CD8-positive, alpha-beta T cell (primary cell): ENCODE measurements at regions of chr1 and their contacts with region 1.

Region 1: DNA sequence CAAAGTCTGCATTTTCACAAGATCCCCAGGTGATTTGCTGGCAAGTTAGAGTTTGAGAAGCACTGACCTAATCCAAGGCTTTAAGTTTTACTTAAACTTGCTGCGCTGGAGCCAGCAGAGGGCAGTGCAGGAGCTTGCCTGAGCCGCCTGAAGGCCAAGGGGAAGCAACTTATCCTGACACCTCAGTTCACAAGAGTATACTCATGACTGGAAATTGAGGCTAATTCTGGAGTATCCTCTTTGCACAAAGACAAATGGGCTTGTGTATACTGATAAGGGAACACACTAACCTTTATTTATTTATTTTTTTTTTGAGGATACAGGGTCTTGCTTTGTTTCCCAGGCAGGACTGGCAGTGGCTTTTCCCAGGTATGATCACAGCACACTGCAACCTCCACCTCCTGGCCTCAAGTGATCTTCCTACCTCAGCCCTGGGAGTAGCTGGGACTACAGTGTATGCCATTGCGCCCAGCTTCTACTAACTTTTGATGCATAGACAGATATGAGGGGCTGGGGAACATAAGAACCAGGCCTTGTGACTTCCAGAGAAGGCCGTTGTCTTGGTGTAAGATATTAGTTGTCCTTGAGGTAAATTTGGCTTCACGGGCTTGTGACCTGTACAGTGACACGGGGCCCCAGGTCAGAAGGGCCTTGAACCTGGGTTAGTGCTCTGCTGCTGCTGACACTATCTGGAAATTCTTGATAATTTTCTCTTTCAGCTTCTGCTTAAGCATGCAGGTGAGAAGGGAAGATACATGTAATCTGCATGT is 29.0 kb upstream of the SLAMF1 start:
- DNase-seq: peak; percentile 49 to 85 (median 80)
- ATAC-seq: peak; percentile 79
- H3K4me3 ChIP-seq: no peak overlapping the region
- H3K4me3 Mint-ChIP-seq: no peak overlapping the region
- H3K27ac ChIP-seq: peak overlapping the region in 1 of 2 experiments; percentile 47
- H3K27ac Mint-ChIP-seq: peak overlapping the region; percentile 84
- H3K4me1 ChIP-seq: peaks cover 45% of the 10 kb centered on the region
- H3K4me1 Mint-ChIP-seq: peaks cover 16% of the 10 kb centered on the region
- H3K27me3 ChIP-seq: no peaks in the 10 kb centered on the region
- H3K27me3 Mint-ChIP-seq: no peaks in the 10 kb centered on the region
- CTCF ChIP-seq: peak; percentile 76

Region 2: GRCh38 chr1:160354388-160354985 is 321.3 kb before region 1 on chr1:
- CTCF ChIA-PET with region 1: no interaction called
- POLR2A ChIA-PET with region 1: no interaction called
- intact Hi-C with region 1: no loop called
- DNase-seq: peak in 3 of 9 experiments; percentile 19 to 43 (median 33)
- ATAC-seq: peak; percentile 48
- H3K4me3 ChIP-seq: no peak overlapping the region
- H3K4me3 Mint-ChIP-seq: no peak overlapping the region
- H3K27ac ChIP-seq: no peak overlapping the region
- H3K27ac Mint-ChIP-seq: peak overlapping the region; percentile 37
- H3K4me1 ChIP-seq: no peaks in the 10 kb centered on the region
- H3K4me1 Mint-ChIP-seq: no peaks in the 10 kb centered on the region
- H3K27me3 ChIP-seq: no peaks in the 10 kb centered on the region
- H3K27me3 Mint-ChIP-seq: no peaks in the 10 kb centered on the region
- CTCF ChIP-seq: peak; percentile 30

Region 3: DNA sequence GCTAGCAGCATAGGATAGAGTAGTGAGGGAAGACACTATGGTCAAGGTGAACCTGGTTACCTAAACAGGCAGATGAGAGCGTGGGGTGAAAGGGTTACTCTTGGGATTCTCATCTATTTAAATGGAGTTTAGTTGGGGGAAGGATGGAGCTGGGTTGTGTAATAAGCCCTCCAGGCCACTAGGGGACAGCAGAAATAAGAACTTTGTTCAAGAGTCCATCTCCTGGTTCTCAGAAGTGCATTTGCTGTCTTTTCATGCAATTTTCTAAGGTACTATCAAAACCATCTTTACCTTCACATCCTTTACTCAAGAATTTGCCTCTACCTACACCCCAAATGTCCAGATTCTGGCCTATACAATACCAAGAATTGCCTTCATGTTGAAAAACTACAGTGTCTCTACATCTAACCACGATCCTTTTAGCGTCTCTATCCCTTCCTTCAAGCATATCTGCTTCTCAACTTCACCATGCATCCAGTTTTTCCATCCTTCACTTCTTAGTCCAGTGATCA is 57.0 kb before region 1 on chr1:
- CTCF ChIA-PET with region 1: interaction called, 75 read pairs
- POLR2A ChIA-PET with region 1: interaction called, 5 read pairs
- intact Hi-C with region 1: loop called (anchors 1 kb)
- DNase-seq: peak in 5 of 9 experiments; percentile 39 to 74 (median 43)
- ATAC-seq: peak; percentile 69
- H3K4me3 ChIP-seq: no peak overlapping the region
- H3K4me3 Mint-ChIP-seq: no peak overlapping the region
- H3K27ac ChIP-seq: no peak overlapping the region
- H3K27ac Mint-ChIP-seq: peak overlapping the region; percentile 49
- H3K4me1 ChIP-seq: peaks cover 13% of the 10 kb centered on the region
- H3K4me1 Mint-ChIP-seq: peaks cover 51% of the 10 kb centered on the region
- H3K27me3 ChIP-seq: no peaks in the 10 kb centered on the region
- H3K27me3 Mint-ChIP-seq: no peaks in the 10 kb centered on the region
- CTCF ChIP-seq: peak; percentile 77

Region 4: GRCh38 chr1:160646711-160647328 is 29.0 kb before region 1 on chr1 and contains the start of gene SLAMF1:
- CTCF ChIA-PET with region 1: interaction called, 19 read pairs
- POLR2A ChIA-PET with region 1: interaction called, 3 read pairs
- intact Hi-C with region 1: no loop called
- DNase-seq: peak in 5 of 9 experiments; percentile 34 to 71 (median 52)
- ATAC-seq: peak; percentile 74
- H3K4me3 ChIP-seq: peak within 1 kb of the TSS; percentile 51 to 60
- H3K4me3 Mint-ChIP-seq: peak within 1 kb of the TSS; percentile 87
- H3K27ac ChIP-seq: peak within 1 kb of the TSS; percentile 57 to 58
- H3K27ac Mint-ChIP-seq: peak within 1 kb of the TSS; percentile 88
- H3K4me1 ChIP-seq: peaks cover 73% of the 10 kb centered on the region
- H3K4me1 Mint-ChIP-seq: peaks cover 89% of the 10 kb centered on the region
- H3K27me3 ChIP-seq: no peaks in the 10 kb centered on the region
- H3K27me3 Mint-ChIP-seq: no peaks in the 10 kb centered on the region
- CTCF ChIP-seq: no peak
- total RNA-seq, gene SLAMF1: 12.8 to 18.6 TPM

Region 5: DNA sequence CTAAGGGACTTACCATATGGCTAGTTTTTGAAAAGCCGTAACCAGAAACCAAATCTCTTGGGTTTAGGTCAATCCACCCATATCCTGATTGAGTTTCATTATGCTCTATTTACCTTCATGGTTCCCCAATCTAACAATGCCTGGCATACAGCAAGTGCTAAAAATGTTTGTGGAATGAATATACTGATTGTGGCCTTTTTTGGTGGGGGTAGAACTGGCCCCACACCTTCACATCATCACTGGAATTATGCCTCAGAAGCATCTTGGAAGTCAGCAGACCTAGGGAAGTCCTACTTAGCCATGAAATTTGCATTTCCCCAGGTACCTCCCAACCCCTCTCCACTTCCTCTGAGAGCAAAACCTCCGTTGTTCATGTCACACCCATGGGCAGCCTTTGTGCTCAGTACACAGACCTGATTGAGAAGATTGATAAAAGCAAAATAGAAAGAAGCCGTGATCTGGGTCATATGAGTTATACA is 11.2 kb before region 1 on chr1:
- CTCF ChIA-PET with region 1: interaction called, 11 read pairs
- POLR2A ChIA-PET with region 1: interaction called, 5 read pairs
- intact Hi-C with region 1: loop called in 1 of 2 experiments (anchors 2 kb)
- DNase-seq: peak in 4 of 9 experiments; percentile 35 to 66 (median 52)
- ATAC-seq: peak; percentile 82
- H3K4me3 ChIP-seq: no peak overlapping the region
- H3K4me3 Mint-ChIP-seq: peak overlapping the region; percentile 54
- H3K27ac ChIP-seq: peak overlapping the region in 1 of 2 experiments; percentile 59
- H3K27ac Mint-ChIP-seq: peak overlapping the region; percentile 75
- H3K4me1 ChIP-seq: peaks cover 43% of the 10 kb centered on the region
- H3K4me1 Mint-ChIP-seq: peaks cover 58% of the 10 kb centered on the region
- H3K27me3 ChIP-seq: no peaks in the 10 kb centered on the region
- H3K27me3 Mint-ChIP-seq: no peaks in the 10 kb centered on the region
- CTCF ChIP-seq: no peak

Region 6: GRCh38 chr1:160768295-160768657 is 92.5 kb after region 1 on chr1:
- CTCF ChIA-PET with region 1: interaction called, 147 read pairs
- POLR2A ChIA-PET with region 1: interaction called, 7 read pairs
- intact Hi-C with region 1: loop called (anchors 1 kb)
- DNase-seq: peak; percentile 72 to 94 (median 85)
- ATAC-seq: peak; percentile 92
- H3K4me3 ChIP-seq: peak overlapping the region; percentile 31 to 41
- H3K4me3 Mint-ChIP-seq: peak overlapping the region; percentile 82
- H3K27ac ChIP-seq: peak overlapping the region; percentile 33 to 85
- H3K27ac Mint-ChIP-seq: peak overlapping the region; percentile 96
- H3K4me1 ChIP-seq: peaks cover 18% of the 10 kb centered on the region
- H3K4me1 Mint-ChIP-seq: peaks cover 20% of the 10 kb centered on the region
- H3K27me3 ChIP-seq: no peaks in the 10 kb centered on the region
- H3K27me3 Mint-ChIP-seq: no peaks in the 10 kb centered on the region
- CTCF ChIP-seq: peak; percentile 92